Naive thymus-derived CD4-positive, alpha-beta T cell (primary cell): ENCODE measurements at regions of chr12 and their contacts with region 1.

Region 1: GRCh38 chr12:4320853-4321701 is at the start of gene TIGAR:
- DNase-seq: peak; percentile 86 to 97 (median 90)
- ATAC-seq: peak; percentile 99
- H3K4me3 ChIP-seq: peak within 1 kb of the TSS; percentile 85
- H3K4me3 Mint-ChIP-seq: peak within 1 kb of the TSS; percentile 83 to 97 (median 95)
- H3K27ac ChIP-seq: peak within 1 kb of the TSS; percentile 84
- H3K27ac Mint-ChIP-seq: peak within 1 kb of the TSS; percentile 74 to 96 (median 92)
- H3K4me1 ChIP-seq: peaks cover 14 to 15% of the 10 kb centered on the region in 2 donors
- H3K4me1 Mint-ChIP-seq: peaks cover 21 to 53% (median 46%) of the 10 kb centered on the region in 7 donors
- H3K27me3 ChIP-seq: no peaks in the 10 kb centered on the region
- H3K27me3 Mint-ChIP-seq: no peaks in the 10 kb centered on the region
- total RNA-seq, gene TIGAR: 7.1 to 15.8 (median 11.1) TPM

Region 2: DNA sequence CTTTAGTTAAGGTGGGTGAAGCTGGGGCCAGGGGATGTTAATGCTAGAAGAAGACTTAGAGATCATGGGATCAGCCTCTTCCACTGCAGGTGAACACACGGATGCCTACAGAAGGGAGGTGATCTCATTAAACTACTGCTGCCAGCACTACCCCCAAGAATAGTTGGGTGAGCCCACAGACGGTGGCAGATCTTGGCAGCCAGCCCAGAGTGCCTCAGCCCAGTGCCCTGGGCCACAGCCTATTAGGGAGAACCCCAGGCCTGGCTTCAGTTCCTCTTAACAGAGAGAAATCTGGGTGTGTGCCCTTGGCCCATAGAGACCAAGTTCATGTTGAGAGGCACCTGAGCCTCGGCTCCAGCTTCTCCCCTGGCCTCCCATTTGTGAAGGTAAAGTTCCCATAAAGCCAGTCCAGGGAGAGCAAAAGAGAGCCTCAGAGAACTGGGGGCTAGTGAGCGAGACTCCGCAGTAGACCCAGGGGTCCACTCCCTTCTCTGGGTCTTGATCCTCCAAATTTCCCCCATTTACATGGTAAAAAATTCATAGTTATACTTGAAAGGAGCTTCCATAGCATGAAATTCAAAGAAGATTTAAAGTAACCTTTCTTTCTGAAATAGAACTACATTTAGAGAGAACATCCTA is 172.5 kb before region 1 on chr12:
- CTCF ChIA-PET with region 1: no interaction called
- POLR2A ChIA-PET with region 1: no interaction called
- intact Hi-C with region 1: no loop called
- DNase-seq: peak in 1 of 9 donors; percentile 37
- ATAC-seq: peak; percentile 80
- H3K4me3 ChIP-seq: no peak overlapping the region
- H3K4me3 Mint-ChIP-seq: no peak overlapping the region
- H3K27ac ChIP-seq: no peak overlapping the region
- H3K27ac Mint-ChIP-seq: peak overlapping the region in 5 of 9 donors; percentile 14 to 70 (median 61)
- H3K4me1 ChIP-seq: peaks cover 13 to 41% of the 10 kb centered on the region in 2 donors
- H3K4me1 Mint-ChIP-seq: peaks cover 20 to 93% (median 34%) of the 10 kb centered on the region in 7 donors
- H3K27me3 ChIP-seq: no peaks in the 10 kb centered on the region
- H3K27me3 Mint-ChIP-seq: no peaks in the 10 kb centered on the region

Region 3: DNA sequence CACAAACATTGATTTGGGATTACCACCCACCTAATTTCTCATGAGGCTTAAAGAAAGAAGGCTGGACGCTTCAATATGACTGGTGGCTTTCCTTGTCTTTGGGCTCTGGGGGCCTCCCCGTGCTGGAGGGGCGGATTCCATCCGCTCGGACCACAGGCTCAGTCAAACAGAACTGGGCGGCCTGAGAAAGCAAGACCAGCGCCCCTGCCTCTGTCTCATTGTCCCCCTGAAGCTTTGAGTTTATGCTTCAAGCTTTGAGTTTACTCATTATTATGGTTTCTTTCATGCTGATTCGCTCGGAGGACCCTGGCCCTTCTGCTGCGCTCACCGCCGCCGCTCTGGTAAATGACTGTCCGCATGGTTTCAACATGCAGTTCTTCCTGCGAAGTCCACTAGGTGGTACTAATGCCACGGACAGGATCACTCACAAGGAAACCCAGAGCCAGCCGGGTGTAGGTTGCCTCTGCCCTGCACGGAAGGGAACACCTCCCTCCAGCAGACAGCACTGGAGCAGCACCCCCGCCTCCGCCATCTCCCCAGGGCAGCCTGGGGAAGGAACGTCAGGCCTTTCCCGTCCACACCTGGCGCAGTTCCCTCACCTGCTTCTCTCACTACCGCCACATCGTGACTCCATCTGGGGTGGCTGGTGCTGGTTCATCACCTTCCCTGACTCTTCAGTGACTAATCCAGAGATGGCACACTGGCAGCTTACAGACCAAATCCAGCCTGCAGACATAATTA is 13.3 kb before region 1 on chr12:
- CTCF ChIA-PET with region 1: interaction called, 3 read pairs
- POLR2A ChIA-PET with region 1: interaction called, 5 read pairs
- intact Hi-C with region 1: loop called in 1 of 2 experiments (anchors 2 kb)
- DNase-seq: peak in 1 of 9 donors; percentile 7
- ATAC-seq: peak; percentile 47
- H3K4me3 ChIP-seq: no peak overlapping the region
- H3K4me3 Mint-ChIP-seq: no peak overlapping the region
- H3K27ac ChIP-seq: no peak overlapping the region
- H3K27ac Mint-ChIP-seq: peak overlapping the region in 3 of 9 donors; percentile 37 to 72 (median 65)
- H3K4me1 ChIP-seq: no peaks in the 10 kb centered on the region
- H3K4me1 Mint-ChIP-seq: peaks cover 0 to 15% (median 0%) of the 10 kb centered on the region in 7 donors
- H3K27me3 ChIP-seq: no peaks in the 10 kb centered on the region
- H3K27me3 Mint-ChIP-seq: no peaks in the 10 kb centered on the region

Region 4: GRCh38 chr12:4449851-4450221 is 128.8 kb after region 1 on chr12:
- CTCF ChIA-PET with region 1: no interaction called
- POLR2A ChIA-PET with region 1: no interaction called
- intact Hi-C with region 1: no loop called
- DNase-seq: no peak
- ATAC-seq: no peak
- H3K4me3 ChIP-seq: no peak overlapping the region
- H3K4me3 Mint-ChIP-seq: no peak overlapping the region
- H3K27ac ChIP-seq: no peak overlapping the region
- H3K27ac Mint-ChIP-seq: no peak overlapping the region
- H3K4me1 ChIP-seq: no peaks in the 10 kb centered on the region
- H3K4me1 Mint-ChIP-seq: no peaks in the 10 kb centered on the region
- H3K27me3 ChIP-seq: no peaks in the 10 kb centered on the region
- H3K27me3 Mint-ChIP-seq: peaks cover 20 to 35% (median 30%) of the 10 kb centered on the region in 5 donors

Region 5: DNA sequence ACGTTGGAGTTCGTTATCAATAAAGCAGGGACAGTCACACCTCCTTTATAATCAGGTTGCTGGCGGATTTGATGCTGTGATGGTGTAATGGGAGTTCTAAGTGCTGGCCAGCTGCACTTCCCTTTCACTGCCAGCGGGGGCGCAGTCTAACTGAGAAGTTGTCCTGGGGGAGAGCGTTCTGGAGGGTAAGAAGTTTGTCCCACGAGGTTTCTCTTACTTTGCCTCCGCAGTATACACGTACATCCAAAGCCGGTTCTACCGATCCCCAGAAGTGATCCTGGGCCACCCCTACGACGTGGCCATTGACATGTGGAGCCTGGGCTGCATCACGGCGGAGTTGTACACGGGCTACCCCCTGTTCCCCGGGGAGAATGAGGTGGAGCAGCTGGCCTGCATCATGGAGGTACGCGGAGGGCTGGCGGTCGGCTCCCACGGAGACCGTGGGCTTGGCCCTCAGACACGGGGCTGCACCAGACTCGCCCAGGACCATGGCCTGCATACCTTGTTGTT is 283.7 kb after region 1 on chr12:
- CTCF ChIA-PET with region 1: no interaction called
- POLR2A ChIA-PET with region 1: no interaction called
- intact Hi-C with region 1: loop called in 1 of 2 experiments (anchors 1 kb)
- DNase-seq: peak; percentile 63 to 82 (median 76)
- ATAC-seq: peak; percentile 99
- H3K4me3 ChIP-seq: peak overlapping the region; percentile 92
- H3K4me3 Mint-ChIP-seq: peak overlapping the region; percentile 83 to 99 (median 98)
- H3K27ac ChIP-seq: peak overlapping the region; percentile 67
- H3K27ac Mint-ChIP-seq: peak overlapping the region; percentile 83 to 97 (median 90)
- H3K4me1 ChIP-seq: peaks cover 7 to 10% of the 10 kb centered on the region in 2 donors
- H3K4me1 Mint-ChIP-seq: peaks cover 16 to 48% (median 35%) of the 10 kb centered on the region in 7 donors
- H3K27me3 ChIP-seq: no peaks in the 10 kb centered on the region
- H3K27me3 Mint-ChIP-seq: peaks cover 0 to 19% (median 7%) of the 10 kb centered on the region in 5 donors